Motor neuron (in vitro differentiated cells): ENCODE measurements at regions of chr21 and their contacts with region 1.

Region 1: DNA sequence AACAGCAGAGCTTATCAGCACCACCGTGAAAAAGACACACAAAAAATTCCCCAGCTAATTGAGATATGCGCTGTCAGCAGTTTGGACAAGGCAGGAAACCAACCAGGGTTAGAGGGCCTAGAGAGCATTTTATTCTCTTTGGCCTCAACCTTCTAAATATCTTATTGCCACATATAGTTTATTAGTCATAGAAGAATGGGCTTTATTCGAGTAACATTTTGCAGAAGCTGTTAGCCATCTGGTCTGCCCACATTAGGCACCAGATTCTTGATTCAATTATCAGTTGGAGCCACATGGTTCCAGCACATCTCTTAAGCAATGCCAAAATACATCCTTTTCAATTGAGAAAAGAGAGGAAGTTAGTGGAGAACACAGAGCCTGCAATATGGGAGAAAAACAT is 109.9 kb upstream of the CXADR start:
- ATAC-seq: no peak
- H3K4me3 ChIP-seq: no peak overlapping the region
- H3K27ac ChIP-seq: no peak overlapping the region
- H3K4me1 ChIP-seq: no peaks in the 10 kb centered on the region

Region 2: GRCh38 chr21:17195976-17196375 is 207.0 kb before region 1 on chr21:
- in situ Hi-C with region 1: no loop called
- ATAC-seq: peak in 3 of 8 experiments; percentile 32 to 98 (median 55)
- H3K4me3 ChIP-seq: no peak overlapping the region
- H3K27ac ChIP-seq: no peak overlapping the region
- H3K4me1 ChIP-seq: no peaks in the 10 kb centered on the region

Region 3: DNA sequence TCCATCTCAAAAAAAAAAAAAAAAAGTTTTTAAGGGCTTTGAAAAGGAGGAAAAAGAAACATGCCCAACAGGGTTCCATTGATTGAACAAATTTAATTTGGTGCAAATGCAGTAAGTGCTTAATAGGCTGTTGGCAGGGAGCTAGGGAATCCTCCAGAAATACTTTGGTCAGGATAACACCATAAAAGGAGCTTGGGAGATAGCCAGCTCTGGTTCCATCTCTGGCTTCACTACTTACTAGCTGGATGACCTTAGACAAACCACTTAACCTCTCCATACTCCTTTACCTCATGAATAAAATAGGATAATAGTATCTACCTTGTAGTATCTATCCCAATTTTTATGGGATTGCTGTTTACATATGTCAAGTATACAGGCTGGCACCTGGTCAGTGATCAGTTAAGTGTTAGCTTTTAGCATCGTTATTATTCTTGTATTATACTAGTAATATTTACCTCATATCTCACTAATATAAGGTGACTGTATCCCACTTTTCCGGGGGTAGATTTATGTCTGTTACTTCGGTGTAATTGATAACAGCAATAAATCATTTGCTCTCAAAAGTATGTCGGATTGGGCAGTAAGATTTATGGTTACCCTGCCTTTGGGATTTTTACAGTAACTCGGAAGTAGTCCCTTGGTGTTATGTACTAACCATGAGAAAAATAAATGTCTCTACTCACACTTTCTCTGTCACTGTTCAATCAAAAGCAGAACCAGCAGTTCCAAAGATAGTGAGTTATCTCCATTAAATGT is 173.3 kb after region 1 on chr21:
- in situ Hi-C with region 1: loop called in 3 of 9 experiments (anchors 10 to 25 kb)
- ATAC-seq: no peak
- H3K4me3 ChIP-seq: no peak overlapping the region
- H3K27ac ChIP-seq: no peak overlapping the region
- H3K4me1 ChIP-seq: no peaks in the 10 kb centered on the region

Region 4: DNA sequence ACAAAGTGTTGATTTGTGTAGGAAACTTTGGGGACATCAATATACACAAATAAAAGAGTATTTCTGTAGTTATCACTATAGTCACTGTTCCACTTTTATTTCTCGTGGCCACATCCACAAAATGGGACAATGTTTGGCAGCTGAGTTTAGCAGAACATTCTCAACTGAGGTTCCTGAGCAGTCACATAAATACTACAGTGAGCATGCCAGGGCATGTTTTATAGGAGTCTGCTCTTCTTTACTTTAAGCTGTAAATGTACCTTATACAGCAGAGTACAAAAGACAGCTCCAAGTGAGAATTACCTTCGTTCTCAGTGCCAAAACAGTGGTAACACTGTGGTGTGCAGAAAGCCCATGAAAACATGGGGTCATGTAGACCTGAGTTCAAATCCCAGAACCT is 204.7 kb after region 1 on chr21:
- in situ Hi-C with region 1: no loop called
- ATAC-seq: no peak
- H3K4me3 ChIP-seq: no peak overlapping the region
- H3K27ac ChIP-seq: no peak overlapping the region
- H3K4me1 ChIP-seq: peaks cover 0 to 5% of the 10 kb centered on the region in 2 donors